ENCODE measurements at regions of chr1 and their contacts with region 1.

Region 1: GRCh38 chr1:26695356-26696118 is at the start of gene ARID1A:
- DNase-seq: peak; percentile 98
- H3K4me3 Mint-ChIP-seq: peak within 1 kb of the TSS; percentile 85
- H3K27ac Mint-ChIP-seq: peak within 1 kb of the TSS; percentile 94
- H3K4me1 Mint-ChIP-seq: peaks cover 32% of the 10 kb centered on the region
- H3K27me3 Mint-ChIP-seq: no peaks in the 10 kb centered on the region
- total RNA-seq, gene ARID1A: 88.9 to 90.0 TPM

Region 2: DNA sequence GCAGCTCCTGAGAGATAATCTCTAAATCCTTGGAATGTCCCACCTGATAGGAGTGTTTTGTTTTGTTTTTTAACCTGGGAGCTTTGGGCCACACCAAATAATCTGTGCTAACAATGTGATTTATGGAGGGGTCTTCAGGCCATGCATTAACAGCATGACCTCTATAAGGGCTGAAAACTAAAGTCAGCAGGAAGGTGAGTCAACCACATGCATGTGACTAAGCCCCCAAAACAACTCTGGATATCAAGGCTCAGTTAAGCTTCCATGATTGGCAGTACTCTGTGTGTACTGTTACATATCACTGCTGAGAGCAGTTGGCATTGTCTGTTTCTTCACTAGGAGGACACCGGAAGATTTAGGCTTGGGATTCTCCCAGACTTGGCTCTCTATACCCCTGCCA is 847.0 kb before region 1 on chr1:
- CTCF ChIA-PET with region 1: no interaction called
- POLR2A ChIA-PET with region 1: no interaction called
- DNase-seq: no peak
- H3K4me3 Mint-ChIP-seq: no peak overlapping the region
- H3K27ac Mint-ChIP-seq: no peak overlapping the region
- H3K4me1 Mint-ChIP-seq: no peaks in the 10 kb centered on the region
- H3K27me3 Mint-ChIP-seq: no peaks in the 10 kb centered on the region

Region 3: GRCh38 chr1:26440259-26440658 is 255.3 kb before region 1 on chr1:
- CTCF ChIA-PET with region 1: no interaction called
- POLR2A ChIA-PET with region 1: no interaction called
- DNase-seq: no peak
- H3K4me3 Mint-ChIP-seq: no peak overlapping the region
- H3K27ac Mint-ChIP-seq: no peak overlapping the region
- H3K4me1 Mint-ChIP-seq: peaks cover 2% of the 10 kb centered on the region
- H3K27me3 Mint-ChIP-seq: no peaks in the 10 kb centered on the region

Region 4: DNA sequence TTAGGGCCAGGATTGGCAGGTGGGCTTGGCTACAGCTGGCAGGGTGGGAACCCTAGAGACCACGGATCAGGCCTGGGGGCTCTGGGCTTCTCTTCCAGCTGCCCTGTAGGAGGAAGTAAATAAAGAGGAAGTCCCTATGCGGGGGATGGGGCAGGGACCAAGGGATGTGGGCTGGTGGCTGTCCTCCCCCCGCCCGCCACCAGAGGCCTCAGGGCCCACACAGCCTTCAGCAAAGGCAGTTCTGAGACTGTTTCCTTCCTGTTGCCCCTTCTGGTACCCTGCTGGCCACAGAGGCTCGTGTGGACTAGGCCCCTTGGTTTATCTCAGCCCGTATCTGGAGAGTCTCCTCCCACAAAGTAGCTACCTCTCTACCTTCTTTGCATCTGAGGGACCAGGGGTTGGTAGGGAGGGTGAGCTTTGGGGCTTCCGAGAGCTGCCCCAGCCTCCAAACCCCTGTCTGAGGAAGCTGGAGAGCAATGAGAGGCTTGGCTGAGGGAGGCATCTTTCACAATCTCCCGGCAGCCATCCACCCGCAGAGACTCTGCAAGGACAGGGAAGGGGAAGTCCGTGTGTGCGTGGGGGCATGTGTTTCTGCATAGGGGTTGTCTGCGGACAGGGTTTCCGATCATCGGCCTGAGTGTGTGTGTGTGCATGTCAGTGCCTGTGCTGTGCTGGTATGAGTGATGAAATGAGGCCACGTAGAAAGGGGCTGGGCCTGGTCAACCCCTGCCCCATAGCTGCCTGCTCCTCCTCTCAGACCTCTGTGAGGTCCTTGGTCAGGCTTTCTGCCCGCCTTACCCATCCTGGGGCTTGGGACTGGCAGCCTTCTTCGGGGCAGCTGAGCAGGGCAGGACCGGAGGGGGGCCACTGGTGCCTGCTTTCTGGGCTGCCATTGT is 153.5 kb before region 1 on chr1:
- CTCF ChIA-PET with region 1: interaction called, 5 read pairs
- POLR2A ChIA-PET with region 1: interaction called, 15 read pairs
- DNase-seq: peak; percentile 89
- H3K4me3 Mint-ChIP-seq: peak overlapping the region; percentile 74
- H3K27ac Mint-ChIP-seq: peak overlapping the region; percentile 96
- H3K4me1 Mint-ChIP-seq: peaks cover 93% of the 10 kb centered on the region
- H3K27me3 Mint-ChIP-seq: no peaks in the 10 kb centered on the region

Region 5: GRCh38 chr1:26677306-26678115 is 18.0 kb before region 1 on chr1:
- CTCF ChIA-PET with region 1: interaction called, 20 read pairs
- POLR2A ChIA-PET with region 1: interaction called, 25 read pairs
- DNase-seq: peak; percentile 56
- H3K4me3 Mint-ChIP-seq: no peak overlapping the region
- H3K27ac Mint-ChIP-seq: no peak overlapping the region
- H3K4me1 Mint-ChIP-seq: peaks cover 21% of the 10 kb centered on the region
- H3K27me3 Mint-ChIP-seq: peaks cover 2% of the 10 kb centered on the region

Region 6: DNA sequence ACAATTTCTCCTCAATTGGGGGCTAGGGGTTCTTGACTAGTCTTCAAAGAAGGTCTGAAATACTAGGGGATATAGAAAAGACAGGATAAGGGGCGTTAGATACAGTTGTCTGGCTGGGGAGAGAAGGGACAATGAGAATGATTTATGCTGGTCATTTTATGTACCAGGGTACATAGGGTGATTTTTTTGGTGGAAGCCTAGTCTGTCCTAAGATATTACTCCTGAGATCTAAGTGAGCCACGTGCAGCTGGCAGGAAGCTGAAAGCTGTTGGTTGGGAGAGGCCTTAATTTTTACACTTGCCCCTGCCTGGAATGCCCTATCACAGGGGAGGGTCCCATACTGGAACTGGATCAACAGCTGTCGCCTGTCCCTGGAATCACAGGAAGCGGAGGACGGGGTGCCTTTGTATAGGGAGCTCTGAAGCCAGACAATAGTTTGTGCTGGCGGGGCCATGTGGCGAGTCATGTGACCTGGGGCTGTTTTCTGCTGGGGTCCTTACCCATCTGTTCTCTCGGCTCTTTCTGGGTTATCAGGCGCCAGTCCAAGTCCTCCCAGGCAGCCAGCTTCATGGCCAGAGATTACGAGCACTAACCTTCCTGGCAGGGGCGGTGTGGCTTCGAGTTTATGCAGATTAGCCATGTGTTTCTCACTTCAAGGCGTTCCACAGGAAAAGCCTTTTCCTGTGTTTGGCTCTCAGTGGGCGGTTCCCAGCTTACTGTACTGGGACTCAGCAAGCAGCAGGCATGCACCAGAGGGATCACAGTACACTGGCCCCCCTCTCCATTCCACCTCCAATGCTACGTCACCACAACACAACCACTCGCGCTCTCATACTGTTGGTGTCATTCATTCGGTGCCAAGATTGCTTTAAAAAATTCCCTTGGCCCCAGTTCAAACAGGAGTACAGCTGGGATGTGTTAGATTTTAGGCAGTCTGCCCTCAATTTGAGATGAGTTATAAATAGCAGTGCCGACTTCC is 27.8 kb after region 1 on chr1:
- CTCF ChIA-PET with region 1: interaction called, 4 read pairs
- POLR2A ChIA-PET with region 1: interaction called, 32 read pairs
- DNase-seq: peak; percentile 38
- H3K4me3 Mint-ChIP-seq: no peak overlapping the region
- H3K27ac Mint-ChIP-seq: peak overlapping the region; percentile 12
- H3K4me1 Mint-ChIP-seq: peaks cover 78% of the 10 kb centered on the region
- H3K27me3 Mint-ChIP-seq: no peaks in the 10 kb centered on the region

Region 7: DNA sequence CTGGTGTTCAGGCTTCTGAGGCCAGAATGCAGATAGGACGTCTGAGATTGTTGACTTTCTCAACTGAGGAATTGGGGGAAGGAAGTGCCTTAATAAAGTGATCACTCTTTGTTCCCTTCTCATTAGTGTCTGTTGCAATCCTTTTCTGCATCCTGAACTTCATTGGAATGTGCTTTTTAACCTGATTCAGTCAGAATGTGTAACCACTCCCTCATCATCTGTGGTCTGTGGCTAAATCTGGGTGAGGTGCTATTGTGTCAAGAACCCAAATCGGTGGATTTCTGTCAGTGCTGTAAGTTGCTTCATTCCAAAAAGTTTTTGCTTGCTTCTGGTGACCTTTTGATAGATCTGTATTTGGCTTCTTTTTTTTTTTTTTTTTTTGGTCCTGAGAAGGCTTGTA is 38.4 kb after region 1 on chr1:
- CTCF ChIA-PET with region 1: interaction called, 5 read pairs
- POLR2A ChIA-PET with region 1: interaction called, 204 read pairs
- DNase-seq: peak; percentile 52
- H3K4me3 Mint-ChIP-seq: no peak overlapping the region
- H3K27ac Mint-ChIP-seq: peak overlapping the region; percentile 50
- H3K4me1 Mint-ChIP-seq: peaks cover 53% of the 10 kb centered on the region
- H3K27me3 Mint-ChIP-seq: no peaks in the 10 kb centered on the region

Region 8: GRCh38 chr1:26799479-26800142 is 104.1 kb after region 1 on chr1:
- CTCF ChIA-PET with region 1: interaction called, 9 read pairs
- POLR2A ChIA-PET with region 1: interaction called, 28 read pairs
- DNase-seq: peak; percentile 30
- H3K4me3 Mint-ChIP-seq: peak overlapping the region; percentile 52
- H3K27ac Mint-ChIP-seq: peak overlapping the region; percentile 89
- H3K4me1 Mint-ChIP-seq: peaks cover 55% of the 10 kb centered on the region
- H3K27me3 Mint-ChIP-seq: no peaks in the 10 kb centered on the region

Region 9: DNA sequence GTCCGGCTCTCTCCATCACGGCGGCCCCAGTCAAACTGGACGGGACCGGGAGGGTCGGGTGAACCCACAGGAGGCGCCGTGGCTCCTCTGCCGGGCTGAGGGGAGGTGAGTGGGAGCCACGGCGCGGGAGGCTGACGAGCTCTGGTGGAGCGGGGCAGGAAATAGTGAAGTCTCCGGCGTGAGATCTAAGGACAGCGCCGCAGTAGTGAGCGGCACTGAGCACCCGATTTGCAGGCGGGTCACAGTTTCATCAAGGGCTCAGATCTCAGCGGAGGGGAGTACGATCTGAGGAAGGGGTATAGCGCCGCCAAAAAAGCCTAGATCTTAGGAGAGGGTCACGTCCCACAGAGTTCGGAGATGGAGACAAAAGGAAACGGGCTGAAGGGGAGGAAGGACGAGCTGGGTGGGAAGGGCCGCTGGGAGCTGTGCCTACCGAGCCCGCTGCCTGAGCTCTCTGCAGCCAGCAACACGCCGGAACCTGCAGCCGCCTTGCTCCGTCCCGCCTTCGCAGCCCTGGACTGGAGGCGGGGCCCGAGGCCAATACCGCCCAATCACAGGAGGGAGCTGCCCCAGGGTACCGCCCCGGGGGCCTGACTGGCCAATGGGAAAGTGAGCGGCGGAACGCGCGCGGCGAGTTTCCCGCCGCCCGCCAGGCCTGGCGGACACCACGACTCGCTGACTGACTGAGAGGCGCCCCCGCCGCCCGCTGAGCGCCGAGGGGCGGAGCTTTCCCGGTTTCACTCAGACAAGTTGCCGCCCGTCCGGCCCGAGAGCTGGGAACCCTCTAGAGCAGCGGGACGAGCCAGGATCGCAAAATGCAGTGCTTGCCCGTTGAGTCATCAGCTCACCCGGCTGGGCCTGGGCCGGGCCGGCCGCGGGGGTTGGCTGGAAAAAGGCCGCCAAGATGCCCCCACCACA is 169.3 kb after region 1 on chr1:
- CTCF ChIA-PET with region 1: interaction called, 4 read pairs
- POLR2A ChIA-PET with region 1: interaction called, 35 read pairs
- DNase-seq: peak; percentile 97
- H3K4me3 Mint-ChIP-seq: peak overlapping the region; percentile 90
- H3K27ac Mint-ChIP-seq: peak overlapping the region; percentile 93
- H3K4me1 Mint-ChIP-seq: peaks cover 37% of the 10 kb centered on the region
- H3K27me3 Mint-ChIP-seq: no peaks in the 10 kb centered on the region